Activated B cell treated with CpG ODN at 0.5 μM for 24 hours (primary cell): ENCODE measurements at regions of chr16 and their contacts with region 1.

Region 1: GRCh38 chr16:48244080-48244862 is at the start of gene LONP2:
- DNase-seq: peak; percentile 86
- ATAC-seq: peak; percentile 97
- H3K4me3 Mint-ChIP-seq: peak within 1 kb of the TSS; percentile 91
- H3K27ac Mint-ChIP-seq: peak within 1 kb of the TSS; percentile 90
- H3K4me1 Mint-ChIP-seq: peaks cover 34% of the 10 kb centered on the region
- H3K27me3 Mint-ChIP-seq: no peaks in the 10 kb centered on the region
- CTCF ChIP-seq: no peak
- total RNA-seq, gene LONP2: 63.5 and 72.7 TPM in 2 replicates

Region 2: GRCh38 chr16:46621006-46621933 is 1623.0 kb before region 1 on chr16 and contains the start of gene SHCBP1:
- CTCF ChIA-PET with region 1: no interaction called
- POLR2A ChIA-PET with region 1: no interaction called
- intact Hi-C with region 1: loop called (anchors 5 kb)
- DNase-seq: peak; percentile 63
- ATAC-seq: peak; percentile 97
- H3K4me3 Mint-ChIP-seq: peak within 1 kb of the TSS; percentile 88
- H3K27ac Mint-ChIP-seq: peak within 1 kb of the TSS; percentile 37
- H3K4me1 Mint-ChIP-seq: peaks cover 24% of the 10 kb centered on the region
- H3K27me3 Mint-ChIP-seq: no peaks in the 10 kb centered on the region
- CTCF ChIP-seq: no peak
- total RNA-seq, gene SHCBP1: 1.9 and 2.0 TPM in 2 replicates

Region 3: GRCh38 chr16:46728806-46729205 is 1515.5 kb before region 1 on chr16:
- CTCF ChIA-PET with region 1: no interaction called
- POLR2A ChIA-PET with region 1: interaction called, 13 read pairs
- intact Hi-C with region 1: no loop called
- DNase-seq: no peak
- ATAC-seq: no peak
- H3K4me3 Mint-ChIP-seq: no peak overlapping the region
- H3K27ac Mint-ChIP-seq: no peak overlapping the region
- H3K4me1 Mint-ChIP-seq: no peaks in the 10 kb centered on the region
- H3K27me3 Mint-ChIP-seq: no peaks in the 10 kb centered on the region
- CTCF ChIP-seq: no peak

Region 4: DNA sequence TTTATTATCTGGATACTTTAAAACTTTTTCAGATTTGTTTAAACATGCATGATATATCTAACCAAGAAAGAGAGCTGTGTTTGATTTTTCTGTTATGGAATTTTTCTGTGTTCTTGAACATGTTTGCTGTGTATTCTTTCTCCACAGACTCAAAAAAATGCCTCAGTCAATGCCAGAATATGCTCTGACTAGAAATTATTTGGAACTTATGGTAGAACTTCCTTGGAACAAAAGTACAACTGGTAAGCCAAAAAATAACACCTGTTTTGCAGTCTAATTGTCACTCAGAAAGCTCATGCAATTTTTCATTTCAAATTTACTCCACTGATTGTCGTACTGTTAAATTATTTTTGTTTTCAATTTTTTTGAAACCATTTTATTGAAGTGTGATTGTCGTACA is 18.4 kb after region 1 on chr16:
- CTCF ChIA-PET with region 1: no interaction called
- POLR2A ChIA-PET with region 1: no interaction called
- intact Hi-C with region 1: no loop called
- DNase-seq: no peak
- ATAC-seq: no peak
- H3K4me3 Mint-ChIP-seq: no peak overlapping the region
- H3K27ac Mint-ChIP-seq: no peak overlapping the region
- H3K4me1 Mint-ChIP-seq: no peaks in the 10 kb centered on the region
- H3K27me3 Mint-ChIP-seq: no peaks in the 10 kb centered on the region
- CTCF ChIP-seq: no peak